ENCODE measurements at regions of chr11 and their contacts with region 1.

Region 1: DNA sequence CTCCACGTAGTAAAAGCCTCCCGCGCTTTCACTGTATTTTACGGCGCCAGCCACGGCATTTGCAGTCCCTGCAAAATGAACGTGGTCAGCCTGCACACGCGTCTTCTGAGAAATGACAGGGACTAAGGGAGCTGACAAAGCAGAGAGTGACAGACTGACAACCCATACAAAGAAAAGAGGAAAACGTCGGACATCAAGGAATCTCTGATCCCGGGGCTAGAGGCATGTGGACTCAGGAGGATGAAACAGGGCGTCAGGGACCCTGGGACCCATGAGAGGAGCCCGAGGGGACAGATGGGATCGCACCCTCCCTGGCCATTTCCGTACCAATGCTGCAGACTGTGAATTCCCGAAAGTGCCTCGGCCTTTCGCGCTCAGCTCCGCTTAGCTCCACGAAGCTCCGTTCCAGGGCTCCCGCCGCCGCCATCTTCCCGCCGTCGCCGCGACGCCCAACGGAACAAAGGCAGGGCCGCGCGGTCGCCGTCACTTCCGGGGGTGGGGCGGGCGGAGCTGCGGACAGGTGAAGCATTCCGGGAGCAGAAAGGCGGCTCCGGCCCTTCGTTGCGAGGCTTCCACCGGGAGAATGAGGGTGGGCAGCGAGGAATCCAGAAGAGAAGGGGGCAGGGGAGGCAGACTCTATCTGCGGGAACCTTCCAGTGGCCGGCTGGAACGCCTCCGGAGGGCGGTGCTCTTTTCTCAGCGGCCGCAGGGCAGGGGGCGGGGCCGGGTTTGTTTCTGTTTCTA is at the start of gene NUP160:
- DNase-seq: peak; percentile 86 to 87
- ATAC-seq: peak; percentile 91 to 97 (median 95)
- H3K4me3 ChIP-seq: peak within 1 kb of the TSS; percentile 53 to 99 (median 86)
- H3K27ac ChIP-seq: peak within 1 kb of the TSS; percentile 69 to 95 (median 92)
- H3K4me1 ChIP-seq: peaks cover 3 to 50% (median 30%) of the 10 kb centered on the region in 9 donors
- H3K27me3 ChIP-seq: no peaks in the 10 kb centered on the region
- CTCF ChIP-seq: peak in 2 of 9 donors; percentile 29 to 35
- total RNA-seq, gene NUP160: 13.4 to 17.7 (median 14.7) TPM

Region 2: GRCh38 chr11:47766305-47767227 is 81.5 kb before region 1 on chr11:
- intact Hi-C with region 1: loop called in 2 of 10 experiments (anchors 5 kb)
- DNase-seq: peak; percentile 66 to 69
- ATAC-seq: peak in 7 of 8 donors; percentile 8 to 51 (median 43)
- H3K4me3 ChIP-seq: peak overlapping the region; percentile 78 to 100 (median 91)
- H3K27ac ChIP-seq: peak overlapping the region; percentile 93 to 100 (median 98)
- H3K4me1 ChIP-seq: peaks cover 4 to 40% (median 33%) of the 10 kb centered on the region in 9 donors
- H3K27me3 ChIP-seq: no peaks in the 10 kb centered on the region
- CTCF ChIP-seq: no peak

Region 3: DNA sequence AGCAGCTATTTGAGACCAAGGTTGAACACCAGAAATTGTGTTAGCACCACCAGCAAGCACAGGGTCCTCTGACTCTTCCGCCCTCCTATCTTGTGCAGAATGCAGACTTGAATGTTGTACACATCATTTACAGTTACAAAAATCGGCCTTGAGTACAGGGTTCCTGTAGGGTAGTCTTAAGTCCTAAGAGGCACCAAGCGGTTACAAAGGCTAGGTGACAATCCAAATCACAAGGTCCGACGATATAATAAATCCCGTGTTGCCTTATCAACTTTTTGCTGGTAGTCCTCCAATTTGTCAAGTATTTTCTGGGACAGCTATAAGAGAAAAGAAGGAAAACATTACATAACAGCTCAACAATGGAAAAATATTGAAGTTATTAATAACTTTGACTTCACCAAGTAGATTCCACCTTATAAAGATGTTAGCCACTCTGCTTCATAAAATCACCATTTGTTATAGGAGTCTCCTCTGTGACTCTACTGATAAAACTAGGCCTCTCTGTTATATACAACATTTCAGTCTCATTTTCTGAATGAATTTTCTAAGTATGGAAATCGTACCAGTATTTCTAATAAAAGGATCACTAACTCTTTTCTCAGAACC is 69.1 kb before region 1 on chr11:
- intact Hi-C with region 1: no loop called
- DNase-seq: no peak
- ATAC-seq: peak in 6 of 8 donors; percentile 35 to 73 (median 56)
- H3K4me3 ChIP-seq: no peak overlapping the region
- H3K27ac ChIP-seq: peak overlapping the region; percentile 2 to 80 (median 48)
- H3K4me1 ChIP-seq: peaks cover 0 to 35% (median under 1%) of the 10 kb centered on the region in 9 donors
- H3K27me3 ChIP-seq: no peaks in the 10 kb centered on the region
- CTCF ChIP-seq: no peak

Region 4: GRCh38 chr11:47917643-47918369 is 69.7 kb after region 1 on chr11:
- intact Hi-C with region 1: loop called in 1 of 10 experiments (anchors 5 kb)
- DNase-seq: peak; percentile 65 to 82
- ATAC-seq: peak; percentile 76 to 93 (median 88)
- H3K4me3 ChIP-seq: peak overlapping the region in 6 of 10 donors; percentile 14 to 32 (median 27)
- H3K27ac ChIP-seq: peak overlapping the region in 9 of 10 donors; percentile 24 to 79 (median 57)
- H3K4me1 ChIP-seq: peaks cover 0 to 66% (median 32%) of the 10 kb centered on the region in 9 donors
- H3K27me3 ChIP-seq: no peaks in the 10 kb centered on the region
- CTCF ChIP-seq: no peak